ENCODE measurements at regions of chr5 and their contacts with region 1.

Region 1: GRCh38 chr5:138725138-138725833 is 27.9 kb upstream of the CTNNA1 start:
- DNase-seq: peak; percentile 28 to 63
- ATAC-seq: peak; percentile 75 to 88 (median 84)
- H3K4me3 ChIP-seq: peak overlapping the region; percentile 25
- H3K27ac ChIP-seq: peak overlapping the region; percentile 61
- H3K4me1 ChIP-seq: peaks cover 24% of the 10 kb centered on the region
- H3K27me3 ChIP-seq: no peaks in the 10 kb centered on the region
- CTCF ChIP-seq: peak; percentile 37

Region 2: GRCh38 chr5:138594305-138595058 is 130.8 kb before region 1 on chr5:
- intact Hi-C with region 1: loop called (anchors 10 kb)
- DNase-seq: no peak
- ATAC-seq: no peak
- H3K4me3 ChIP-seq: no peak overlapping the region
- H3K27ac ChIP-seq: no peak overlapping the region
- H3K4me1 ChIP-seq: no peaks in the 10 kb centered on the region
- H3K27me3 ChIP-seq: no peaks in the 10 kb centered on the region
- CTCF ChIP-seq: no peak

Region 3: DNA sequence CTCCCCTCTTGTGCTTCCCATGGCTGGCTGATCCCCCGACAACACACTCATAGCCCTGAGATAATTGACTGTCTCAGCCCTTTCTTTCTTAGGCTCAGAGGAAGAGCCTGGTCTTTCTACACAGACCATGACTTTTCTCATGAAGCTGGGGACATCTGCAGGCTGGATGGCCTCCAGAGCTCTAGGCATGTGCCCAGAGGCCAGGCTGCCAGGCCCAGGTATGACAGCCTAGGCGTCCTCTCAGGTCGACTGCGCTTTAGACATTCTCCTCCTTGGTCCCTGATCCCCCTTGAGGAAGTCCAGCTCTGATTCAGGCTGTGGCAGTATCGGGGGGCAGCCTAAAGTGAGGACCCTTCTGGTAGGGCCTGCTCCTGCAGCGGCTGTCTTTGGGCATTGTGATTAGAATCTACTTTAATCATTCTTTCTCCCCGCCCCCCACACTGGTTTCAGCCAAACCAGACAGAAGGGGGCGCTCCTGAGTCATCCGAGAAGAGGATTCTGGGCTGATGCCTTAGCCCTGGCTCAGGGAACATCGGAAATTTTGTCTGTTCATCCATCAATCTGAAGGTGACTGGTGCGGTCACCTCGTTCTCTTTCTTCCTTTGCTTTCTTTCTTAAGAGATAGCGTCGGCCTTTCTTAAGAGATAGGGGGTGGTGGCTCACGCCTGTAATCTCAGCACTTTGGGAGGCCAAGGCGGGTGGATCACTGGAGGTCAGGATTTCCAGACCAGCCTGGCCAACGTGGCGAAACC is 83.6 kb before region 1 on chr5:
- intact Hi-C with region 1: loop called in 1 of 2 experiments (anchors 5 kb)
- DNase-seq: peak; percentile 65 to 74
- ATAC-seq: peak; percentile 65 to 83 (median 76)
- H3K4me3 ChIP-seq: no peak overlapping the region
- H3K27ac ChIP-seq: no peak overlapping the region
- H3K4me1 ChIP-seq: no peaks in the 10 kb centered on the region
- H3K27me3 ChIP-seq: no peaks in the 10 kb centered on the region
- CTCF ChIP-seq: peak; percentile 64

Measured in psoas muscle (tissue), 8 donors.